CD14-positive monocyte (primary cell): ENCODE measurements at regions of chr14 and their contacts with region 1.

Region 1: GRCh38 chr14:68685419-68686204 is 107.3 kb downstream of the ZFP36L1 start:
- DNase-seq: peak; percentile 83 to 89 (median 88)
- H3K4me3 ChIP-seq: no peak overlapping the region
- H3K4me3 Mint-ChIP-seq: peak overlapping the region; percentile 24 to 46
- H3K27ac ChIP-seq: peak overlapping the region; percentile 99 to 100
- H3K27ac Mint-ChIP-seq: peak overlapping the region; percentile 100
- H3K4me1 ChIP-seq: peaks cover 72 to 79% of the 10 kb centered on the region in 2 donors
- H3K4me1 Mint-ChIP-seq: peaks cover 75% of the 10 kb centered on the region
- H3K27me3 ChIP-seq: no peaks in the 10 kb centered on the region
- H3K27me3 Mint-ChIP-seq: peaks cover 0 to 4% (median 1%) of the 10 kb centered on the region in 3 donors
- CTCF ChIP-seq: no peak

Region 2: GRCh38 chr14:68476212-68476907 is 209.3 kb before region 1 on chr14:
- intact Hi-C with region 1: loop called in 1 of 2 experiments (anchors 10 kb)
- DNase-seq: peak; percentile 88 to 94 (median 92)
- H3K4me3 ChIP-seq: peak overlapping the region in 1 of 3 experiments; percentile 19
- H3K4me3 Mint-ChIP-seq: no peak overlapping the region
- H3K27ac ChIP-seq: peak overlapping the region; percentile 90 to 92
- H3K27ac Mint-ChIP-seq: peak overlapping the region; percentile 92 to 95 (median 94)
- H3K4me1 ChIP-seq: peaks cover 51 to 53% of the 10 kb centered on the region in 2 donors
- H3K4me1 Mint-ChIP-seq: peaks cover 59% of the 10 kb centered on the region
- H3K27me3 ChIP-seq: no peaks in the 10 kb centered on the region
- H3K27me3 Mint-ChIP-seq: peaks cover 0 to 3% (median 0%) of the 10 kb centered on the region in 3 donors
- CTCF ChIP-seq: no peak

Region 3: DNA sequence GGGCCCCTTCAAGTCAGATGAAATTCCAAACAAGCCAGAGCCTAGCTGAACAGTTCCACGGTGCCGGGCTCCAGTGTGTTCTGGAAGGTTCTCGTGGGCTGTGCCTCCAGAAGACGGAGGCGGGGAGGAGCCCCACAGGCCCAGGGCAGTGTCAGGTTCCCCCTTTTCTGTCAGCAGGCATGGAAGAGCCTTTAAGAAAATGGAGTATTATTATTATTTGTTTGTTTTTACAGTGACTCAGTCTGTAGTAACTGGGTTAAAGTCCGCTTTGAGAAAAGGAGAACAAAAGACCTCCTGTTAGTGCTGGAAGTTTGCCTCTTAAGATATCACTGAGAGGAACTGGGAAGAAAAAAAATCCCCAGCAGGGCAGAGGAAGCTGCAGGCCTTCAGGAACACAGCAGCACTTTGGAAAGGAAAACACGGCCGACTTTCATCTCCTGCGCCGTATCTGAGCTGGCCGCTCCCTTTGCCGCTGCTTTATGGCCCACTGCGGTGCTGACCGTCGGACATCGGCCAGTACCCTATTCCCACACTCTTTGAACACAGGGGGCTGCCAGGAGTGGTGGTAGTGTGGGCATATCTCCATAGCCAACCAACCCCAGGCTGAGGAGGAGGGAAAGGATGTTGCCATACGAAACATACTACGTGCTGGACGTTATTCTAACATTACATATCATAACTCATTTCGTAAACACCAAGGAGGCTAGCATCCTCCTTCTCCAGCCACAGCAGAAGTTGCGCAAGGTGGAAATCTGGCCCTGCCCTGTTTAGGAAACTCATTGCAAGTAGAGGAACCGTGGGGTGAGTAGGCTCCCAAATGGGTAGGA is 86.8 kb before region 1 on chr14:
- intact Hi-C with region 1: loop called in 1 of 2 experiments (anchors 2 kb)
- DNase-seq: peak; percentile 91 to 96 (median 95)
- H3K4me3 ChIP-seq: peak overlapping the region in 2 of 3 experiments; percentile 13 to 65
- H3K4me3 Mint-ChIP-seq: peak overlapping the region; percentile 62 to 82
- H3K27ac ChIP-seq: peak overlapping the region; percentile 90 to 99
- H3K27ac Mint-ChIP-seq: peak overlapping the region; percentile 98 to 100 (median 99)
- H3K4me1 ChIP-seq: peaks cover 64 to 80% of the 10 kb centered on the region in 2 donors
- H3K4me1 Mint-ChIP-seq: peaks cover 69% of the 10 kb centered on the region
- H3K27me3 ChIP-seq: no peaks in the 10 kb centered on the region
- H3K27me3 Mint-ChIP-seq: peaks cover 0 to 4% (median 0%) of the 10 kb centered on the region in 3 donors
- CTCF ChIP-seq: no peak

Region 4: DNA sequence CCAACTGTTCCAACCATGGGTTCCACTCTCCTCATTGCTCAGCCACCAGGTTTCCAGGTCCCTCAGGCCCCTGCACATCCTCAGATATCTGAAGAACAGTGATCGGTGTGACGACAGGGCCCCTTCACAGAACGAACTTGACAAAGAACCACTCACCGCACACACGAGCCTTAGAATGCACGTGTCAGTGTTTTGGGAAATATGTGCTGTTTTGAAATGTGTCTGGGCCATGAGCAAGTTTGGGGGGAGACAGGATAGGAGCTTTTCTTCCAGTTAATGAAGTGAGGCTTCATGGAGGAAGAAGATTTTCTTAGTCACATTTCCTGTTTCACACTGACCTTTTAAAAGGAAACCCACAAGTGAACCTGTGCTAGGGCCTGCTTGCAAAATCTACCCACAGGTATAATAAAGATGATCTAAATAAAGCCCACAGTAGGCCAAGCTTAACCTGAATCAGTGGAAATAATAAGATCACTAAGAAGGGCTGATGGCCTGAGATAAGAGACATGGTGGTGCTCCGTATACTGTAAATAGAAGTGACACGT is 48.7 kb after region 1 on chr14:
- intact Hi-C with region 1: loop called in 1 of 2 experiments (anchors 5 kb)
- DNase-seq: peak; percentile 92 to 96 (median 95)
- H3K4me3 ChIP-seq: peak overlapping the region in 1 of 3 experiments; percentile 15
- H3K4me3 Mint-ChIP-seq: peak overlapping the region; percentile 34 to 64
- H3K27ac ChIP-seq: peak overlapping the region; percentile 97 to 99
- H3K27ac Mint-ChIP-seq: peak overlapping the region; percentile 98 to 100 (median 99)
- H3K4me1 ChIP-seq: peaks cover 45 to 50% of the 10 kb centered on the region in 2 donors
- H3K4me1 Mint-ChIP-seq: peaks cover 64% of the 10 kb centered on the region
- H3K27me3 ChIP-seq: peaks cover 20 to 39% of the 10 kb centered on the region in 2 donors
- H3K27me3 Mint-ChIP-seq: peaks cover 46 to 61% (median 46%) of the 10 kb centered on the region in 3 donors
- CTCF ChIP-seq: no peak

Region 5: GRCh38 chr14:68795597-68796417 is 110.2 kb after region 1 on chr14:
- intact Hi-C with region 1: loop called (anchors 5 to 10 kb)
- DNase-seq: peak; percentile 59 to 86 (median 78)
- H3K4me3 ChIP-seq: peak overlapping the region; percentile 64 to 97 (median 77)
- H3K4me3 Mint-ChIP-seq: peak overlapping the region; percentile 95 to 100
- H3K27ac ChIP-seq: peak overlapping the region; percentile 97 to 98
- H3K27ac Mint-ChIP-seq: peak overlapping the region; percentile 94 to 100 (median 99)
- H3K4me1 ChIP-seq: peaks cover 20 to 37% of the 10 kb centered on the region in 2 donors
- H3K4me1 Mint-ChIP-seq: peaks cover 23% of the 10 kb centered on the region
- H3K27me3 ChIP-seq: no peaks in the 10 kb centered on the region
- H3K27me3 Mint-ChIP-seq: peaks cover 10 to 23% (median 10%) of the 10 kb centered on the region in 3 donors
- CTCF ChIP-seq: peak; percentile 87

Region 6: DNA sequence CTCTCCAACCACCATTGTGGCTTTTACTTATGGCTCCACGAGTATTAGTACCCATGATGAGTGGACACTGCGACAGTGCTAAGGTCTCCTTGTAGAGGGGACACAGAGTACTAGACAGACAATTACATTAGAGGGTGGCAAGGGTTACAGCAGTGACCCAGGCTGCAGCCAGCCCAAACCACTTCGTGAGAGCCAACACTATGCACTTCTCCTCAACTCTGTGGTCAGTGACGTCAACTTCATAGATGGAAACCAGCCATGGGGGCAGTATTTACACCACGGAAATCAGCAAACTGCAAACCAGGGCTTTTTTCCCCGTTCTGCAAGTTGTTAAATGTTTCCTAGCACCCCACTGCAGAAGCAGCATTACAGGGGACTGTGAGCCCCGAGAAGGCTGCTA is 168.8 kb after region 1 on chr14:
- intact Hi-C with region 1: no loop called
- DNase-seq: no peak
- H3K4me3 ChIP-seq: no peak overlapping the region
- H3K4me3 Mint-ChIP-seq: no peak overlapping the region
- H3K27ac ChIP-seq: no peak overlapping the region
- H3K27ac Mint-ChIP-seq: no peak overlapping the region
- H3K4me1 ChIP-seq: no peaks in the 10 kb centered on the region
- H3K4me1 Mint-ChIP-seq: no peaks in the 10 kb centered on the region
- H3K27me3 ChIP-seq: no peaks in the 10 kb centered on the region
- H3K27me3 Mint-ChIP-seq: peaks cover 0 to 5% (median 0%) of the 10 kb centered on the region in 3 donors
- CTCF ChIP-seq: no peak